ENCODE measurements at regions of chr4 and their contacts with region 1.

Region 1: DNA sequence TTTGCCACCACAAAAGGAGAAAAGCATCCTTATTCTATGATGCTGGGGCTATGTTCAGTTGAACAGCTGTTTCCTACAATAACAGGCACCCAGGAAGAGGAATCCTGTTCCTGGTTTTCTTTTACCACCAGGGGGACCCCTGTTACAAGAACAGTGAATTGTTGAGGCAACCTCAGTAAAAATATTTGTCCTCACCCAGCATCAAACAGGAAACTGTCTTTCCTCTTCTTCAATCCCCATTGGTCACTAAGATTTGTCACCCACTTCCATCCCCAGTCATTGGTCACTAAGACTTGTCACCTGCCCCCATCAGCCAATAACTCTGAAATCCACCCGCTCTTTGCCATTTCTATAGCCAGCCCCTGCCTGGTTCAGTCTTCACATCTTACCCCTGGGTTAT is 143.5 kb upstream of the GALNT7 start:
- DNase-seq: peak; percentile 43 to 62
- H3K4me3 ChIP-seq: no peak overlapping the region
- H3K27ac ChIP-seq: no peak overlapping the region
- H3K4me1 ChIP-seq: no peaks in the 10 kb centered on the region; the same call in 1 of the 2 replicates
- H3K27me3 ChIP-seq: no peaks in the 10 kb centered on the region
- CTCF ChIP-seq: peak; percentile 67

Region 2: DNA sequence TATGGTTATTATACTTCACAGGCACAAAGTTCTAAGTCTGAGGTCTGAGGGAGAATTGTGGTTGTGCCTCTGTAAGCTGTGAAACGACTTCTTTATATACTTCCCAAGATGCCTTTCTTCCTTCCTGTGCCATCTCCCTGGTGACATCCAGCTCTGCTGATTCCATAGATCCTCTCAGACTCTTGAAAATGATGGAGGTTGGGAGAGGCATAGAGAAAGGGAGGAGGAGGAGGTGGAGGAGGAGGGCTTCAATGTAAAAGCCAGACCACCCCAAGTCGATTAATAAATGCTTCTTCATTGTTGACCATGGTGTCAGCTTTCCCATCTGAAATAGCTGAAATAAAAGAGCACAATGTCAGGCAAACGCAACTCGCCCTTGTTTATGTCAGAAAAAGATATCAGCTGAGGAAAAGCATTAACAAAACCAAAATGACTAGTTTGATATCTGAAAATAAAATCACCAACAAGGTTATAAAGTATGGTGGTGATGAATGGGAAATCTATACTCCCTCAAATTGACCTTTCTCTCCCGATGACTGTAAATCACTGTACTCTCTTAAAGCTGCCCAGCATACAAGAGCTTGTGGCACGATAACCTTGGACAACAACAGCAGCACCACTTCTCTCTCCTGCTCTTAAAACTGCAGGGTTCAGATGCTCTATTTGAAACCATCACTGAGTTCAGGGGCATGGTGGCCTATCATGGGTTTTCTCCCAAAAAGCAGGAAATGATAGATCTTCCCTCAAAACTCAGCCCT is 86.9 kb before region 1 on chr4:
- CTCF ChIA-PET with region 1: no interaction called
- POLR2A ChIA-PET with region 1: no interaction called
- intact Hi-C with region 1: no loop called
- DNase-seq: no peak
- H3K4me3 ChIP-seq: no peak overlapping the region
- H3K27ac ChIP-seq: no peak overlapping the region
- H3K4me1 ChIP-seq: no peaks in the 10 kb centered on the region
- H3K27me3 ChIP-seq: no peaks in the 10 kb centered on the region
- CTCF ChIP-seq: no peak

Region 3: GRCh38 chr4:173218411-173219125 is 193.4 kb after region 1 on chr4:
- CTCF ChIA-PET with region 1: no interaction called
- POLR2A ChIA-PET with region 1: no interaction called
- intact Hi-C with region 1: no loop called
- DNase-seq: peak; percentile 20 to 76
- H3K4me3 ChIP-seq: no peak overlapping the region
- H3K27ac ChIP-seq: peak overlapping the region; percentile 70
- H3K4me1 ChIP-seq: peaks cover 35% of the 10 kb centered on the region
- H3K27me3 ChIP-seq: no peaks in the 10 kb centered on the region
- CTCF ChIP-seq: no peak

Region 4: DNA sequence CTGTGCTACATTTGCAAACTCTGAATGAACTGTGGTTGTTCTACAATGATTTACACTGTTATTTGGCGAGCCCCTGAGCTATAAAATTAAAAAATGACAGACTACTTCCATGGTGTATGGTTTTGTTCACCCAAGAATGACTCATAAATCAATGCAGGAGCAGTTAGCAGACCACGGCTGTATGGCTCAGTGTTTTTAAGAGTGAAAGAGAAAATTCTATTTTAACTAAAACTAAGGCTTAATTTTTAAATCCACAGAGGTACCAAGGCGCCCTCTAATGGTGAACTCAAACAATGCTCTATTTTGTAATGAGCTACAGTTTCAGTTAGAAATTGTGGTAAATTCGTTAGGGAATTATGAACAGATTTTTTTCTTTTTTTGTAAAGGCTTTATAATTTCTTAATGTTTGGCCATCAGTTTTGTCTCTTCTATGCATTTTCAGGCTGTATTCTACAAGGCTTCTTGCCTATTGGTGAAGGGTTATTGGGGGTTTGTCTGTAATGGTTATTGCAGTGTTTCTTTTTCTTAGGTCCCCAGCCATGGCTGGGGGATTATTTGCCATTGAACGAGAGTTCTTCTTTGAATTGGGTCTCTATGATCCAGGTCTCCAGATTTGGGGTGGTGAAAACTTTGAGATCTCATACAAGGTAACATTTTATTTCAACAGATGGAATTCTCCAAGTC is 276.5 kb after region 1 on chr4:
- CTCF ChIA-PET with region 1: interaction called, 7 read pairs
- POLR2A ChIA-PET with region 1: no interaction called
- intact Hi-C with region 1: loop called (anchors 1 kb)
- DNase-seq: no peak
- H3K4me3 ChIP-seq: no peak overlapping the region
- H3K27ac ChIP-seq: no peak overlapping the region
- H3K4me1 ChIP-seq: no peaks in the 10 kb centered on the region
- H3K27me3 ChIP-seq: no peaks in the 10 kb centered on the region
- CTCF ChIP-seq: peak; percentile 71

Measured in PC-9 (cell line).